GM12878 (cell line): ENCODE measurements at regions of chr9 and their contacts with region 1.

Region 1: GRCh38 chr9:136093995-136094881 is 851 bp downstream of the NACC2 start:
- DNase-seq: no peak
- ATAC-seq: peak; percentile 81
- H3K4me3 ChIP-seq: peak overlapping the region; percentile 63
- H3K27ac ChIP-seq: peak overlapping the region; percentile 61; the same call in 1 of the 2 replicates
- H3K4me1 ChIP-seq: peaks cover 6% of the 10 kb centered on the region
- H3K27me3 ChIP-seq: no peaks in the 10 kb centered on the region
- CTCF ChIP-seq: no peak
- EP300 ChIP-seq: no peak
- POLR2A ChIP-seq: peak; percentile 31; the same call in 1 of the 2 replicates
- RAD21 ChIP-seq: no peak

Region 2: DNA sequence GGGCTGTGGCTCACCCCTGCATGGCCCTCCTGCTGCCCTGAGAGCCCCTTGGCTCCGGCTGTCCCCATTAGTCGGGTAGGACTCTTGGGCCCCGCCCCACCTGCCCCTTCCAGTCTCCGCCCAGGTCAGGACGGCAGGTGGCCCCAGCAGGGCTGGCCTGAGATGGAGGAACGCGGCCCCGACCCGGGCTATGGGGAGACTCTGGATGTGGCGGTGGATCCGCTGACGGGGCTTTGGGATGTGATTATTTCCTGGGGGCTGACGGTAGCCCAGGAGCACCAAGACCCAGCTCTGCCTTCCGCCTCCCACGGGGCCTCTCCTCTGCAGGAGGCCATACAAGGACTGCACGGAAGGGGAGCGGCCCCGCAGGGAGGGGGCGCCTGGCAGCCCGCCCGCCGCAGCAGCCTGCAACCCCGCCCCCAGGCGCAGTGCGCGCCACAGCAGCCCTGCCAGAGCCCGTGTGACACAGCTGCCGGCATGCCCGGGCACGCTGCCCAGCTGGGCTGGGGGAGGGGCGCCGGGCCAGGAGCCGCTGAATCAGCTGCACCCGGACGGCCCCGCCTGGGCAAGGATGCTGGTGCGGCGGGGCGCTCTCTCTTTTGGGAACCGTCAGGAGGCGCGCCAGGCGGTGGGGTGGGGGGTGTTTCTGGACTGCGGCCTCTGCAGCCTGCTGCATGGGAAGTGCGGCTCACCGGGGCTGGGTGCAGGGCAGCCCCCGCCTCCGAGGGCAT is 15.3 kb after region 1 on chr9:
- CTCF ChIA-PET with region 1: interaction called, 13 read pairs
- POLR2A ChIA-PET with region 1: interaction called, 28 read pairs
- RAD21 ChIA-PET with region 1: interaction called, 52 read pairs
- SMC1A ChIA-PET with region 1: interaction called, 19 read pairs
- in situ Hi-C with region 1: no loop called
- intact Hi-C with region 1: no loop called
- DNase-seq: peak; percentile 77
- ATAC-seq: peak; percentile 90
- H3K4me3 ChIP-seq: peak overlapping the region; percentile 76
- H3K27ac ChIP-seq: peak overlapping the region; percentile 77
- H3K4me1 ChIP-seq: peaks cover 49% of the 10 kb centered on the region
- H3K27me3 ChIP-seq: no peaks in the 10 kb centered on the region
- CTCF ChIP-seq: peak in 2 of 3 experiments; percentile 9 to 19; a peak in 2 of 6 replicates
- EP300 ChIP-seq: peak; percentile 57 to 74; a peak in 3 of 4 replicates
- POLR2A ChIP-seq: no peak
- RAD21 ChIP-seq: no peak